ENCODE measurements at regions of chr2 and their contacts with region 1.

Region 1: DNA sequence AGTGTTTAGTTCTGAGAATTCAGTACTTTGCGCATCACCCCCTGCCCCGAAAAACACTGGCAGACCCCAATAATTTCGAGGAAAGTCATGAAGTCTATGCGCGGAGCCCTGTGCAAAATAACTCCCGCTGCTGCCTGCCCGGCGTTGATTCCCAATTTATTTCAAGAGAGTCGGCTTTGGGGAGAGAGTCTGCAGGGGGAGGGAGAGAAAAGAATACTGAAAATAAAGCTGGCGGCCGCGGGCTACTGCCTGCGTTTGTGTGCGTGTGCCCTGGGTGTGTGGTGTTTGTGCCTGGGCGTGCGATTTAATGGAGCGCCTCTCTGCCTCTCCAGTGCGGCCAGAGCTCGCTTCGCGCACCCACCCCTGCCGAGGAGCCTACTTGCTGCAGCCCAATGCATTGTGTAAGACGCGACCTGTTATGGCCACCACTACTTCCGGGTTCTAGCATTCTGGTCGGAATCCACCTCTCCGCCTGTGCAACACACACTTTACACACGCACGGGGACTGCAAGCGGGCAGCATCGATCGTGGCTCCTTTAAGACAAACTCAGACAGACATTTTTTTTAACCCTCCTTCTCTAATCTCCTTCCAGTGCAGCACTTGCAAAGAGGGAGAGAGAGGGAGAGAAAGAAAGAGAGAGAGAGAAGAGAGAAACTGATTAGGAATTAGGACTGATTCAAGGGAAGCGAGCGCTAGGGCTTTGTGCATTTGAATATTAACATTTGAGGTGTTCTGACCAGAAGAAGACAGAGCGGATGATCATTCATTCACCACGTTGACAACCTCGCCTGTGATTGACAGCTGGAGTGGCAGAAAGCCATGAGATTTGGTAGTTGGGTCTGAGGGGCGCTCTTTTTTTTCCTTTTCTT is at the start of gene MEIS1:
- DNase-seq: peak; percentile 75
- H3K4me3 Mint-ChIP-seq: peak within 1 kb of the TSS; percentile 74
- H3K27ac Mint-ChIP-seq: no peak within 1 kb of the TSS
- H3K4me1 Mint-ChIP-seq: peaks cover 15% of the 10 kb centered on the region
- H3K27me3 Mint-ChIP-seq: peaks cover 84% of the 10 kb centered on the region
- total RNA-seq, gene MEIS1: 0.31 TPM in 1 of 2 replicates, not detected in the other

Region 2: DNA sequence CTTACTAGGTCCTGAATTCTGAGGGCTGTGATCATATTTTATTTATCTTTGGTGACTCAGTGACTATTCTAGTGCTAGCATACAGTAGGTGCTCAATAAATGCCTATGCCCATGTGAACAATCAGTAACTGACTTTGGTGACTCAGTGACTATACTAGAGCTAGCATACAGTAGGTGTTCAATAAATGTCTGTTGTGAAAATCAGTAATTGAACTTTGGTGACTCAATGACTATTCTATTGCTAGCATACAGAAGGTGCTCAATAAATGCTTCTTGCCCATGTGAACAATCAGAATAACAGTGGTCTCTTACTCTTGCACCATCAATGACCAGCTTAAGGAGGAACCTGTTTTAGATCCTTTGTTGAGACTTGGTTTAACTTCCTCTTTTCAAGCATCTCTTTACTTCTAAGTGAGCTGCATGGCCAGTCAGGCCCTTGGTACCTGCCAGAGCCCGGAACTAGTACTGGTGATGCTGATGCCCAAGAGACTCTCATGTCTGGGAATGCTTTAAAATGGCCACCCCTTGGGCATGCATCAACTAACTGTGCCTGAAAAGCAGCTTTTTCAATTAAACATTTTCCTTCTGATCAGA is 787.6 kb before region 1 on chr2:
- intact Hi-C with region 1: loop called (anchors 10 kb)
- DNase-seq: no peak
- H3K4me3 Mint-ChIP-seq: no peak overlapping the region
- H3K27ac Mint-ChIP-seq: no peak overlapping the region
- H3K4me1 Mint-ChIP-seq: no peaks in the 10 kb centered on the region
- H3K27me3 Mint-ChIP-seq: peaks cover 9% of the 10 kb centered on the region

Region 3: DNA sequence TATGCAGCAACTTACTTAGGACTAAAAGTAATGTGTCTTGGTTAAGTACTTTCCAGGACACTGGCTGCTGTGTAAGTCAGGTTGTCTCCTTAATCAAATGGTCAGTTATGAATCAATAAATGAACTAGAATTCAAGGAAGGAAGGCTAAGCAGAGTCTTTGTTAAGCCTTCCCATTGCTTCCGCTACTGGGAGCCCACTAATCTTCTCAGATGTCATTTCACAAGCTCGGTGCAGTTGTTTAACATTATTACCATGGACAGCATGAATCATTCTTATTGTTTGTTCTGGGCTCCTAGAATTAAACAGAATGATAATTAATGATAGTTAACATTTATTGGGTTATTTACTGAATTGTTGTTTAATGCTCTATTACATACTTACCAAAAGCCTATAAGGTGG is 26.0 kb before region 1 on chr2:
- intact Hi-C with region 1: no loop called
- DNase-seq: no peak
- H3K4me3 Mint-ChIP-seq: no peak overlapping the region
- H3K27ac Mint-ChIP-seq: no peak overlapping the region
- H3K4me1 Mint-ChIP-seq: no peaks in the 10 kb centered on the region
- H3K27me3 Mint-ChIP-seq: no peaks in the 10 kb centered on the region

Region 4: GRCh38 chr2:66561645-66562303 is 126.9 kb after region 1 on chr2:
- intact Hi-C with region 1: no loop called
- DNase-seq: no peak
- H3K4me3 Mint-ChIP-seq: no peak overlapping the region
- H3K27ac Mint-ChIP-seq: no peak overlapping the region
- H3K4me1 Mint-ChIP-seq: no peaks in the 10 kb centered on the region
- H3K27me3 Mint-ChIP-seq: no peaks in the 10 kb centered on the region

Region 5: DNA sequence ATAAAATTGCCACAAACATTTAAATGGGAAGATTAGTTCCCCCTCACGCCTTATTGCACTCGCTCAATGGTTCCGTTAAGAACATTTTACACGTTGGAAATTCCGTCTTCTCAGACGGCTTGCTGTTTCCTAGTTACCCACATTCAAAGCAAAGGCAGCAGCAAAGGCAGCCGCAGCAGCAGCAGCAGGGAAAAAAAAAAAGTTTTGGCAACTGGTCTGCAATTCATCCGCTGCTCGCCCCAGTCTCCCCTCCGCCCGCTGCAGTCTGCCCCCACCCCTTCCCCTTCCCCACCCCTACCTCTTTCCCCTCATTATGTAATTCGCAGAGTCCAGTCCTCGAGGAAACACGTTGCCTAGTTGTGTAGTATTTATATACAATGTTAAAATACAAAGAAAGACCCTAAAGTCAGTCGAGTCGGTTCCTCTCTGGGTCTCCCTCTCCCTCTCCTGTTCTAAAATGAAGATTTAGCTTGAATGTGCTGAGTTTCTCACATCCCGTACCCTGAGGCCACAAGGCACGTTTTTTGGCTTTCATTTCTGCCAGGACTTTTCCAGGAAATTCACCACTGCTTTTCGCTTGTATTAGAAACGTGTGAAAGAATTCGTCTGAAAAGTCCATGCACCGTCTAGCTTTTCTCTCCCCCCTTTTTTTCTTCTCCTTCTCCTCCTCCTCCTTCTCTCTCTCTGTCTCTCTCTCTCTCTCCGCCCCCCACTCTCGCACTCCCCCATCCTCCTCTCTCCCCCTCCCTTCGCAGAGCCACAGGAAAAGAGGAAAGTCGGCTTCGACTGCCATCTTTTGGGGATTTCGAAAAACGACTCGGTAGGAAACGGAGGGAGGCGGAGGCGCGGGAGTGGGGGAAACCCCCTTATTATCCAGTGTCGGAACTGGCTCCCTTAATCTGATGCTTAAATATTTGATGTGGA is 140.0 kb after region 1 on chr2:
- intact Hi-C with region 1: loop called (anchors 2 kb)
- DNase-seq: no peak
- H3K4me3 Mint-ChIP-seq: peak overlapping the region; percentile 8
- H3K27ac Mint-ChIP-seq: no peak overlapping the region
- H3K4me1 Mint-ChIP-seq: peaks cover 2% of the 10 kb centered on the region
- H3K27me3 Mint-ChIP-seq: peaks cover 51% of the 10 kb centered on the region

Region 6: DNA sequence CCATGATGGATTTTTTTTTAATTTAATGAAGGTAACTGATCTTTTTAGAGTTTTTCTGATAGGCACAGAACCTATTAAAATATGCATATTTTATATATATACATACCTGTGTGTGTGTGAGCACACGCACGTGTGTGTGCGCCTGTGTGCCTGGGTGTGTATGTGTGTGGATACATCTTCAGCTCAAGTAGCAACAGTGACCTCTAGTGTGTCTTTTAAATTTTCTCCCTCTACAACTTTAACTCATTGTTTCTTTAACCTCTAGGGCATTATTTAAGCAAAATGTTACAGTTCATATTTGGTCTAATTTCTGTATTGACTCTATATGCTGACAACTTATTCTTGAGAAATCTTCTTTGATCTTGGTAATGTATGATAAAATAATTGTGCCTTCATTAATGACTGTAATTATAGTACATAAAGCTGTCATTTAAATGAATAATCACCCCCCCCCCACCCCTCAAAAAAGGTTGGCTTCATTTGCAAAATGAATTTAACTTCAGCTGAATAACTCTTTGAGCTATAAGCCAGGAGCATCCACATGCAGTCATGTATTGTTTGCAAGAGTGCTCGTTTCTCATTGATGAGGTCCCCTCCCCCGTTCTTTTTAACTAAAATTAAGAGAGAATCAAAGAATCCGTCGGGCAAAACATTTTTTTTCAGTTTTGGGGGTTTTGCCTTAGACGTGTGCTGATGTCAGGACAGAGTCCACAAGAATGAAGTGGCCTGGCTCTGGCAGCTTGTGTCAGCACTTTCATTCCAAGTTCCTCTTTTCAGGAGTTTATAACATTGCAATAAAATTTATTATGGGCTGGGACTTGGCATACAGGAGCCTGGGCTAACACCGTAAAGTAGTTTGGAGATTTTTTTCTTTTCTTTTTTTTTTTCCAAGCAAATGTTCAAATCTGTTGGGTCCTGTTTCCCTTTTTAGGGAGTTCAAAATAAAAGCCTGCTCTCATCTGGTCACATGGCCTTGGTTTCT is 1042.2 kb after region 1 on chr2:
- intact Hi-C with region 1: loop called (anchors 5 kb)
- DNase-seq: no peak
- H3K4me3 Mint-ChIP-seq: no peak overlapping the region
- H3K27ac Mint-ChIP-seq: no peak overlapping the region
- H3K4me1 Mint-ChIP-seq: no peaks in the 10 kb centered on the region
- H3K27me3 Mint-ChIP-seq: no peaks in the 10 kb centered on the region

Region 7: DNA sequence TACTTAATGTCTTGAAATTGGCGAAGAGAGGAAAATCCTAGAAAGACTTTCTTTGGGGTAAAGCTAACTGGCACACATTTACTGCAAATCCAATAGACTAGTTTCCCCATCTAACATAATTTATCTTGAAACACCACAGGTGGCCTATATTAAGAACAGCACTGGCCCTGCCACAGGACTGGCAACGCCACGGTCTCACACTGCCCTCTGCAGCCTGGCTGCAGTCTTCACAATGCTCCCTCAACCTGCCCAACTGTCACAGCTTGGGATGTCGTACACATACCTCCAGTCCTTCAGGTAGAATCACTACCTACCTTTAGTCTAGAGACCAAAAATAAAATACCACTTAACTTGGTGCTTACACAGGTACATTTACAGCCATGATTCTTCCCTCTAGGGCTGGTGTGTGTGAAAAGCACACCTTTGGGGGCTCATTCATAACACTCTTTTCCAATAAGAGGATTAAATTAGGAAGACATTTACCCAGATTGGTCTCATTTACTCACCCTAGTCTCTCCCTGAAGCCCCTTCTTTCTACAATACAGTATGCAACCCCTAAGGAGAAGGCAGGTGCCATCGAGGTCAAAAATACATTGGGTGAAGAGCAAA is 1405.7 kb after region 1 on chr2:
- intact Hi-C with region 1: loop called (anchors 10 kb)
- DNase-seq: peak; percentile 63
- H3K4me3 Mint-ChIP-seq: no peak overlapping the region
- H3K27ac Mint-ChIP-seq: no peak overlapping the region
- H3K4me1 Mint-ChIP-seq: no peaks in the 10 kb centered on the region
- H3K27me3 Mint-ChIP-seq: peaks cover 4% of the 10 kb centered on the region

Measured in activated CD4-positive, alpha-beta T cell treated with anti-CD3 and anti-CD28 coated beads, Interleukin-2, amount 10 ng/mL, durations not matched to agents 24 days and 14 days (primary cell).